Ascending aorta (tissue), 2 donors: ENCODE measurements at regions of chr9 and their contacts with region 1.

Region 1: GRCh38 chr9:27529316-27530278 is at the start of gene MOB3B:
- DNase-seq: peak in 1 of 2 donors; percentile 90
- H3K4me3 ChIP-seq: peak within 1 kb of the TSS; percentile 84 to 88
- H3K27ac ChIP-seq: peak within 1 kb of the TSS; percentile 88 to 95
- H3K4me1 ChIP-seq: peaks cover 3 to 33% of the 10 kb centered on the region in 2 donors
- H3K27me3 ChIP-seq: no peaks in the 10 kb centered on the region
- CTCF ChIP-seq: peak; percentile 89 to 96 (median 92)
- total RNA-seq, gene MOB3B: 2.4 TPM

Region 2: DNA sequence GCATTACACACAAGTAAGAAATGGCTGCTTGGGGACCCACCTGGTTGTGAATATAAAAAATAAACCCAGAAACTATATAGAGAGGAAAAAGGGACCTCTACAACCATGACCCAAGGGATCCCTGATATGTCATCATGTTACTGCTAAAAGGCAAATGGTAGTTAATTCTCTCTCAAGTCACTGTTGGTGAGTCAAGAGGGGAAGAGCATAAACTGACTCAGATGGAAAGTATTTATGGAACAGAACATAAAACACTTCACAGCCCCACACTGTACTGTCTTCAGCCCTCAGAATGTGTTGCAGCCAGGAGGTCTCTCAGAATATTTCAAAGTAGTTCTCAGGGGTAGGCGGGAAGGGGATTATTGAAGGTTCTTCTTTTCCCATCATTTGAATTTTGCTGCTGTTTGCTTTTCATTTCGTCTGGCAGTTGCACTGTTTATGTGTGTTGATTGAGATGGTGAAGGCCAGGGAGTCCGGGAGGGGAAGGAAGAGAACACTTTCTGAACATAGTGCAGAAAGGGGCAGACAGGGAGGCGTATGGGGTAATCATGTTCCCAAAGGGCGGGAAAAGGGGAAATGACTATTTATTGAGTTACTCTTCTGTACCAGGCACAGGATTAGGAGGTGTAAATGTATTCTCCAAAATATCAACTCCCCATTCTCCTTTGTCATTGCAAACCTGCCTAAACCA is 335.1 kb before region 1 on chr9:
- intact Hi-C with region 1: loop called (anchors 10 kb)
- DNase-seq: no peak
- H3K4me3 ChIP-seq: no peak overlapping the region
- H3K27ac ChIP-seq: peak overlapping the region; percentile 8 to 44
- H3K4me1 ChIP-seq: peaks cover 0 to 9% of the 10 kb centered on the region in 2 donors
- H3K27me3 ChIP-seq: no peaks in the 10 kb centered on the region
- CTCF ChIP-seq: no peak

Region 3: GRCh38 chr9:27394154-27394825 is 135.3 kb before region 1 on chr9:
- intact Hi-C with region 1: loop called (anchors 2 kb)
- DNase-seq: no peak
- H3K4me3 ChIP-seq: no peak overlapping the region
- H3K27ac ChIP-seq: peak overlapping the region; percentile 9 to 52
- H3K4me1 ChIP-seq: peaks cover 0 to 18% of the 10 kb centered on the region in 2 donors
- H3K27me3 ChIP-seq: no peaks in the 10 kb centered on the region
- CTCF ChIP-seq: no peak

Region 4: GRCh38 chr9:27473111-27473529 is 56.5 kb before region 1 on chr9:
- intact Hi-C with region 1: loop called (anchors 5 kb)
- DNase-seq: peak in 1 of 2 donors; percentile 71
- H3K4me3 ChIP-seq: no peak overlapping the region
- H3K27ac ChIP-seq: peak overlapping the region in 1 of 2 donors; percentile 55
- H3K4me1 ChIP-seq: peaks cover 16 to 18% of the 10 kb centered on the region in 2 donors
- H3K27me3 ChIP-seq: no peaks in the 10 kb centered on the region
- CTCF ChIP-seq: no peak

Region 5: DNA sequence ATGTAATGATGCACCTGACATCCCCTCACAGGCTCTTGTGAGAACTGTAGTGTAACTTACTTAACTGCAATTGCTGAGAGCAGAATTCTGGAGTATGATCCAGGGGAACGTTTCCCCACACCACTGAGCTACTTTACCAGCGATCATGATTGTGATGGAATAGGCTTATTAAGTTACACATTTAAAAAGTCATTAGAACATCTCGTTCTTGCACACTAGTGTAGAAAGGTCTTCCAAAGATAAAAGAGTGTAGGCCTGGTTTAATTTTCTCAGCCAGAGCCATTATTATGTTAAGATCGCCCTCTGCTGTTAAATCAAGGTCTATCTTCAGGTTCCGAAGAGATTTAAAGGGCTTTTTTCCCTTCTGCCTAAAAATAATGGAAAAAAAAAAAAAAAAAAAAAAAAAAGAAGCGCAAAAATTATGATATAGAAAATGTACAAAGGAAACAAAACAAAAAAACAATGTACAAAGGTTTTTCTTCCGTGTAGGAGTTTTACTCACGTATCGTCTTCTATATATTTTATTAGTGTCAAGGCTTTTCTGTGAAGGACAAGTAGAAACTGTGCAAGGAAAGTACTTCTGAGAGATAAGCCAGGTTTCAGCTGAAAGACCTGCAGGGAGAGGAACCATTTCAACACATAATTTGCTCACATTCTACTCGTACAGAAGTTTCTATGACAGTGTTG is 18.6 kb after region 1 on chr9:
- intact Hi-C with region 1: loop called (anchors 2 kb)
- DNase-seq: no peak
- H3K4me3 ChIP-seq: no peak overlapping the region
- H3K27ac ChIP-seq: no peak overlapping the region
- H3K4me1 ChIP-seq: no peaks in the 10 kb centered on the region
- H3K27me3 ChIP-seq: no peaks in the 10 kb centered on the region
- CTCF ChIP-seq: peak; percentile 27 to 62 (median 30)

Region 6: DNA sequence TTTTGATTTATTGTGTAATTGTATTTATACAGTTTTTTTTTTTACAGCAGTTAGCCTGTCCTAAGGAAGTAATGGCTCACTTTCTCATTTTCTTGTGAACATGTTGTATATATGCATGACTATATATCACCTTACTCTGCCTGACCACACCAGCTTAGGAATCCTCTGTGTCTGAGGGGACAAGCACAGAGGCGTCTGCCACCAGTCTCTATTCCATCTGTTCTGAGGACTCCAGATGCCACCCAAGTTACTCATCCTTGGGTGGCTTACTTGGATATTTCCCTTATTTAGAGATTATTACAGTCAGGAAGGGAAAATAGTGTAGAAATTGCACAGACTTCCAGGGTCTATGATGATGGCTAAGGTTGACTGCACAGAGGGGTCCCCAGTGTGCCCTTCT is 300.0 kb after region 1 on chr9:
- intact Hi-C with region 1: no loop called
- DNase-seq: no peak
- H3K4me3 ChIP-seq: no peak overlapping the region
- H3K27ac ChIP-seq: no peak overlapping the region
- H3K4me1 ChIP-seq: no peaks in the 10 kb centered on the region
- H3K27me3 ChIP-seq: no peaks in the 10 kb centered on the region
- CTCF ChIP-seq: no peak